ENCODE measurements at regions of chr17 and their contacts with region 1.

Region 1: DNA sequence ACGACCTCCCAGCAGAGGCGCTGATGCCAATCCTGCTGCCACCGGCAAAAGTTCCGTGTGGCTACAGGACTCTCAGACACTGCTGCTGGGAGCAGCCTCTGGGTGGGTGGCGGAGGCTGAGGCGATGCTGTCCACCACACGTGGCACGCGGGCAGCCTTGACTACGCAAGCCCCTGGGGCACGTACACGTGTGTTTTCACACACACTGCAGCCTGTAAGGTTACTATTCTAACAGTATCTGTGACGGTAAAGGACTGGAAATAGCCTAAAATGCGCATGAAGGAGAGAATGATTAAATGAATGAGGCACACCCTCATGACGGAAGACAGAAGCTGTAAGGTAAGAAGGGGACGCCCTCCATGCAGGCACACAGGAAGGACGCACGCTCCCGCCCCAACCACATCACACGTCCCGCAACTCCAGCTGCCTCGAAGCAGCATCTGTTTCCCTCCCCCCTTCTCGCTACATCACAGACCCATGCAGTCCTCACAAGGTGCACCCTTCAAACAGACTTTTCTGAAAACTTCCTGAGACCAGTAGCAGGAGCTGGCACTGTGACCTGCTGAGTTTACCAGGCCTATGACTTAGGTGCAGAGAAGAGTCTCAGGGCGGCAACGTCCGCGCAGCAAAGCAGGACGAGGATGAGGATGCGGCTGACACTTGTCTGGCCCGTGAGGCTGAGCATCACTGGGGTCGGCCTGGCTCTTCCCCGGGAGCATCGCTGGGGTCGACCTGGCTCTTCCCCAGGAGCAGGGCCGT is 28.7 kb upstream of the FASN start:
- DNase-seq: peak; percentile 79
- ATAC-seq: peak; percentile 89
- H3K4me3 Mint-ChIP-seq: peak overlapping the region; percentile 77
- H3K27ac Mint-ChIP-seq: peak overlapping the region; percentile 99
- H3K4me1 Mint-ChIP-seq: peaks cover 41% of the 10 kb centered on the region
- H3K27me3 Mint-ChIP-seq: no peaks in the 10 kb centered on the region

Region 2: GRCh38 chr17:82037113-82037888 is 89.4 kb before region 1 on chr17 and contains the start of gene DCXR:
- POLR2A ChIA-PET with region 1: interaction called, 10 read pairs
- DNase-seq: peak; percentile 99
- ATAC-seq: peak; percentile 95
- H3K4me3 Mint-ChIP-seq: peak within 1 kb of the TSS; percentile 91
- H3K27ac Mint-ChIP-seq: peak within 1 kb of the TSS; percentile 95
- H3K4me1 Mint-ChIP-seq: peaks cover 20% of the 10 kb centered on the region
- H3K27me3 Mint-ChIP-seq: no peaks in the 10 kb centered on the region
- total RNA-seq, gene DCXR: 110 to 115 TPM

Region 3: GRCh38 chr17:82098072-82098821 is 28.5 kb before region 1 on chr17 and contains the start of gene FASN:
- POLR2A ChIA-PET with region 1: interaction called, 16 read pairs
- DNase-seq: peak; percentile 95
- ATAC-seq: peak; percentile 80
- H3K4me3 Mint-ChIP-seq: peak within 1 kb of the TSS; percentile 77
- H3K27ac Mint-ChIP-seq: peak within 1 kb of the TSS; percentile 69
- H3K4me1 Mint-ChIP-seq: peaks cover 5% of the 10 kb centered on the region
- H3K27me3 Mint-ChIP-seq: no peaks in the 10 kb centered on the region
- total RNA-seq, gene FASN: 154 to 163 TPM

Region 4: GRCh38 chr17:82105882-82106687 is 20.6 kb before region 1 on chr17:
- POLR2A ChIA-PET with region 1: interaction called, 29 read pairs
- DNase-seq: peak; percentile 75
- ATAC-seq: peak; percentile 87
- H3K4me3 Mint-ChIP-seq: peak overlapping the region; percentile 89
- H3K27ac Mint-ChIP-seq: peak overlapping the region; percentile 94
- H3K4me1 Mint-ChIP-seq: peaks cover 17% of the 10 kb centered on the region
- H3K27me3 Mint-ChIP-seq: no peaks in the 10 kb centered on the region

Region 5: DNA sequence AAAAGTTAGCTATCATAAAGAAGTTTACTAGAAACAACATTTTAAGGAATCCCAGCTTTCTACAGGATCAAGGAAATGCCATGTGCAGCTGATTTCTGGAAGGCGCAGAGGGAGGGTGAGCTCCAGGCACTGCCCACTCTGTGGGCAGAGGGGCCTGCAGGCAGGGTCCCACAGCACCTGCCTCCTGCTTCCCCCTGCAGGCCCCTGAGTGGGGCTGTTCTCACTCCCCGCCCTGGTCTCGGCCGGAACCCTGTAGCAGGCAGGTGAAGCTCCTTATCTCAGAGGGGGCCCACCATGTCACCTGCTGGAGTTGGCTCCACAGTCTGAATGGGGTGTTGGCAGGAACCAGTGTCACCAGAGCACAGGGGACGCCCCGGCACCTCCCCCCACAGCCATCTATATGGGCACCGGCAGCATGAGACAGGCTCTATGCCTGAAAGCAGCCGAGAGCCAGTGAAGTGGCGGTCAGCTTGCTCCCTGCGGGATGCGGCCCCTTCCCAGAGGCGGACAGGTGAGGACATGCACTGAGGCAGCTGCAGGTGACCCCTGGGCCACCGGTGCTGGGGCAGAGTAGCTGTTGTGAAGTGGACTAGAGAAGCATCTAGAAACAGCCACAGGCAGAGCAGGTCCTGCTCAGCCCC is 18.9 kb after region 1 on chr17:
- POLR2A ChIA-PET with region 1: no interaction called
- DNase-seq: no peak
- ATAC-seq: no peak
- H3K4me3 Mint-ChIP-seq: no peak overlapping the region
- H3K27ac Mint-ChIP-seq: no peak overlapping the region
- H3K4me1 Mint-ChIP-seq: no peaks in the 10 kb centered on the region
- H3K27me3 Mint-ChIP-seq: no peaks in the 10 kb centered on the region